PC-9 (cell line): ENCODE measurements at regions of chr15 and their contacts with region 1.

Region 1: GRCh38 chr15:72375847-72376581 is at the start of gene HEXA:
- DNase-seq: peak; percentile 78 to 97
- H3K4me3 ChIP-seq: peak within 1 kb of the TSS; percentile 84
- H3K27ac ChIP-seq: peak within 1 kb of the TSS; percentile 73
- H3K4me1 ChIP-seq: peaks cover 16% of the 10 kb centered on the region
- H3K27me3 ChIP-seq: no peaks in the 10 kb centered on the region
- CTCF ChIP-seq: no peak
- total RNA-seq, gene HEXA: 129 and 150 TPM in 2 replicates

Region 2: GRCh38 chr15:72473614-72474465 is 97.8 kb after region 1 on chr15 and contains the start of gene ARIH1:
- CTCF ChIA-PET with region 1: no interaction called
- POLR2A ChIA-PET with region 1: no interaction called
- intact Hi-C with region 1: loop called (anchors 2 kb)
- DNase-seq: peak; percentile 84 to 96
- H3K4me3 ChIP-seq: peak within 1 kb of the TSS; percentile 67
- H3K27ac ChIP-seq: peak within 1 kb of the TSS; percentile 94
- H3K4me1 ChIP-seq: peaks cover 27% of the 10 kb centered on the region
- H3K27me3 ChIP-seq: no peaks in the 10 kb centered on the region
- CTCF ChIP-seq: peak; percentile 45; the same call in 1 of the 2 replicates
- total RNA-seq, gene ARIH1: 144 and 190 TPM in 2 replicates